ENCODE measurements at regions of chr14 and their contacts with region 1.

Region 1: DNA sequence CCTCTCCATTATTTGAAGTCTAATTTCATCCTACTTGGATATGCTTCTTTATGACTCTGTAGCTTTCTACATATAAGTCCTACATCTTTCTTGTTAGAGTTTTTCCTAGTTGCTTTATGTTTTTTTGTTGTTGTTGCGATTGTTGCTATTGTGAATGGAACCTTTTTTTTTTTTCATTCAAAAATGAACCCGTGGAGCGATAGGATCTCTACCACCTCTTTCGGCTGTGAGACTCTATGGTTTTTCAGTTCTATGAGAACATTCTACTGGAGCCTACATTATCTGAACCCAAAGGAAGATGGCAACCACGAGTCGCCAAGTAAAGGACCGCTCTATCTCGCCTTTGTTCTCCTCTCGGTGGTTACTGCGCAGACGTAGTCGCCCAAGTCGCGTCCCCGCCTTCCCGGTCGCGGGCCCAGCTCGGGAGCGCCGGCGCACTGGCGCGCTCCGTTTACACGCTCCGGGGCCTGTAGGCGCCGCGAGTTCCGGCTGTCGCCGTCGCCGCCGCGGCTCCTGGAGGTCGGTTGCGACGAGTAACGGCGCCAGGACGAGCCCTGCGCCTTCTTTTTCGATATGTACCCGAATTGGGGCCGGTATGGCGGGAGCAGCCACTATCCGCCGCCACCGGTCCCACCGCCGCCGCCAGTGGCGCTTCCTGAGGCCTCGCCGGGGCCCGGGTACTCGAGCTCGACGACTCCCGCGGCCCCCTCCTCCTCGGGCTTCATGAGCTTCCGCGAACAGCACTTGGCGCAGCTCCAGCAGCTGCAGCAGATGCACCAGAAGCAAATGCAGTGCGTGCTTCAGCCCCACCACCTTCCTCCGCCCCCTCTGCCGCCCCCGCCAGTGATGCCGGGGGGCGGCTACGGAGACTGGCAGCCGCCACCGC is at the start of gene YLPM1:
- DNase-seq: peak; percentile 83 to 97 (median 94)
- ATAC-seq: peak; percentile 86 to 89
- H3K4me3 Mint-ChIP-seq: peak within 1 kb of the TSS; percentile 83 to 98 (median 90)
- H3K27ac Mint-ChIP-seq: peak within 1 kb of the TSS; percentile 89 to 98 (median 96)
- H3K4me1 Mint-ChIP-seq: peaks cover 25 to 52% (median 49%) of the 10 kb centered on the region in 4 donors
- H3K27me3 Mint-ChIP-seq: no peaks in the 10 kb centered on the region
- polyA plus RNA-seq, gene YLPM1: 6.5 to 23.0 (median 14.0) TPM

Region 2: GRCh38 chr14:73771848-73772638 is 991.1 kb before region 1 on chr14:
- POLR2A ChIA-PET with region 1: no interaction called
- DNase-seq: peak in 9 of 10 donors; percentile 44 to 84 (median 65)
- ATAC-seq: peak; percentile 89
- H3K4me3 Mint-ChIP-seq: peak overlapping the region; percentile 43 to 75 (median 70)
- H3K27ac Mint-ChIP-seq: peak overlapping the region; percentile 70 to 97 (median 92)
- H3K4me1 Mint-ChIP-seq: peaks cover 33 to 83% (median 74%) of the 10 kb centered on the region in 4 donors
- H3K27me3 Mint-ChIP-seq: no peaks in the 10 kb centered on the region

Region 3: DNA sequence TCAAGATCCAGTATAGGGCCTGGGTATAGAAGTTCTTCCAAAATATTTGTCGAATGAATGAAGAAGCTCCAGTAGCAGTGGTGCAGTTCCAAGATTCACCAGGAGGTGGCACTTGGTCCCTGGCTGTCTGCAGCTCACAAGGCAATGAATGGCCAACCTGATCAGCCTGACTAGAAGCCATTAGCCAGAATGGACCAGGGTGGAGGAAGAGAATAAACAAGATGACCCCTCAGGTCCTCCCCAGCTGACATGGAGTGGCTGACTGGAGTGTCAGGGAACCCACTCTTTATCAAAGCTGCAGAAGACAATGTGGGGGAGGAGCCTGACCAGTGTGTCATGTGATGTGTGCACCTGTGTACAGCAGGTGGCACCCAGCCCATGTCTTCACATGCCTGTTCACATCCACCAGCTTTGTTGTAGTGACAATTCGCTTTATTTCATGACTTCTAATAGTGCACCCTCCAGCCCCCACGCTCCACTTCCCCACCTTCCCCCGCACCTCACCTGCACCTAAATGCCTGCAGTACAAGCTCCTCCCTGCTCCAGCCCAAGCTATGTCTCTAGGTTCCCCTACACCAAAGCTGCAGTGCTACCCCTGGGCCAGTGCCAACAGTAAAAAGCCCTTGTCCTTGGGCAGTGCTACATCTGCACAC is 154.1 kb before region 1 on chr14:
- POLR2A ChIA-PET with region 1: interaction called, 16 read pairs
- DNase-seq: peak; percentile 64 to 93 (median 84)
- ATAC-seq: peak; percentile 51 to 67
- H3K4me3 Mint-ChIP-seq: peak overlapping the region in 6 of 10 donors; percentile 3 to 79 (median 26)
- H3K27ac Mint-ChIP-seq: peak overlapping the region in 7 of 10 donors; percentile 2 to 81 (median 40)
- H3K4me1 Mint-ChIP-seq: peaks cover 15 to 30% (median 21%) of the 10 kb centered on the region in 4 donors
- H3K27me3 Mint-ChIP-seq: peaks cover 0 to 4% (median 0%) of the 10 kb centered on the region in 5 donors

Region 4: DNA sequence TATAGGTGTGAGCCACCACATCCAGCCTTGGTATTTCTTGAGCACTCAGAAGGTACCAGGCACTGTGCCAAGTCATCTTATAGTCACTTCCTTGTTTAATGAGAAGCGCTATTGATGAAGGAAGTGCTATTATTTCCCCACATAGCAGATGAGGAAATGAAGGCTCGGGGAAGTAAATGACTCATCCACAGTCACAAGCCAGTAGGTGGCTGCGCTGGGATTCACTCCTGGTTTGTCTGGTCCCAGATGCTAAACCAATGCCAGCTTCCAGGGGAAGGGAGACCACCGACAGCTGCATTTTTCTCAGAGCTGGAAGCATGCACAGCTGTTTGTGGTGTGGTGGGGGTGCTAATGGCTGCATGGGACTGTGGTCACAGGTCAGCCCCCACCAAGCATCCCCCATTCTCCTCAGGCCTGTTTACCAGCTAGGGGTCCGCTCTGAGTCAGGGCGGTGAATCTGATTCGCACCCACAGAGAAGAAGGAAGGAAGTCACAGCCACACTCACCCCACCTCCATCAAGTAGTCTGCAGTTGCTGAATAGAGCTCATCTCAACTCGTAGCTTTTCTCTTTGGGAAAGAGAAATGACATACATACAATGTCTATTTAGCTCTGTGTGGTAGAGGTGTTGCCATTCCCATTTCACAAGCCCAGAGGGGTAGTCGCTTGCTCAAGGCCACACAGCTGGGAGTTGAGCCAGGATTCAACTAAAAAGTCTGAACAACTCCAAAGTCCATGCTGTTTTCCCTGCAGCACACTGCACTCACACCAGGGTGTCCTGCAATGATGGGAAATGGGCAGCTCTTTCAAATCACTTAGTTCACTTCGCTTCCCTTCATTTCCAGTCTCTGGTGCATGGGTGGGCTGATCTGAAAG is 144.8 kb before region 1 on chr14:
- POLR2A ChIA-PET with region 1: interaction called, 10 read pairs
- DNase-seq: peak in 9 of 10 donors; percentile 26 to 80 (median 64)
- ATAC-seq: peak; percentile 89 to 92
- H3K4me3 Mint-ChIP-seq: peak overlapping the region; percentile 68 to 87 (median 80)
- H3K27ac Mint-ChIP-seq: peak overlapping the region; percentile 74 to 98 (median 94)
- H3K4me1 Mint-ChIP-seq: peaks cover 37 to 76% (median 64%) of the 10 kb centered on the region in 4 donors
- H3K27me3 Mint-ChIP-seq: peaks cover 0 to 5% (median 0%) of the 10 kb centered on the region in 5 donors

Region 5: GRCh38 chr14:74784634-74785033 is 21.5 kb after region 1 on chr14:
- POLR2A ChIA-PET with region 1: interaction called, 16 read pairs
- DNase-seq: peak in 4 of 10 donors; percentile 9 to 63 (median 46)
- ATAC-seq: peak; percentile 97 to 99
- H3K4me3 Mint-ChIP-seq: peak overlapping the region in 7 of 10 donors; percentile 0 to 59 (median 14)
- H3K27ac Mint-ChIP-seq: peak overlapping the region in 9 of 10 donors; percentile 38 to 92 (median 72)
- H3K4me1 Mint-ChIP-seq: peaks cover 20 to 46% (median 39%) of the 10 kb centered on the region in 4 donors
- H3K27me3 Mint-ChIP-seq: no peaks in the 10 kb centered on the region

Region 6: DNA sequence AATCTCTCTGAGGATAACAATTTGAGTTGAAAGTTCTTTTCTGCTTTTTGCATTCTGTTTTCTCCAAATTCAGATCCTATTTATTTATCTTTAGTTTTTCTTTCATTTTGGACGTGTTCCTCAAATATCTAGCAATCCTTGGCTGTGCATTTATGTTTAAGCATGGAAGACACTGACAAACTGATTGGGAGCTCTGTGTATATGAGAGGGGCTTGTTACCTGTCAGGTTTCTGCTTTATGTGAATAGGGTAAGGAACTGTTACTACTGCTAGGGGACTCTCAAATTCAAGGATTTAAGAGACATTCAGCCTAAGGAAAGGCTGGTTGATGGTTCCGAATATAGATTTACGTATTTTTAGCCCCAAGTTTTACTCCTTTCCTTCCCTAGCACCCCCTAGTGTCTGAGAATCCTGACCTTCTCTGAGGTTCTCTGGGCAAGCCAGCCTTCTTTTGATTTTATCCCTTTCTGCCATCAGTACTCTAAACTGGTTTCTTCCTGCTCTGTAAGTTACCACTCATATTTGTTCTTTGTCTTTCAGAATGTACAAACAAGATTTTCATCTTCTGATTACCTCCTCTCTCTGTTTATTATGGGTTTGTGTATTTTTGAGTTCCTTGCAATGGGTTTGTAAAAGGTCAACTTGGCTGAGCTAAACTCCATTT is 30.5 kb after region 1 on chr14:
- POLR2A ChIA-PET with region 1: interaction called, 15 read pairs
- DNase-seq: peak in 5 of 10 donors; percentile 20 to 57 (median 39)
- ATAC-seq: peak; percentile 64 to 74
- H3K4me3 Mint-ChIP-seq: peak overlapping the region; percentile 68 to 88 (median 80)
- H3K27ac Mint-ChIP-seq: peak overlapping the region; percentile 67 to 96 (median 92)
- H3K4me1 Mint-ChIP-seq: peaks cover 28 to 68% (median 56%) of the 10 kb centered on the region in 4 donors
- H3K27me3 Mint-ChIP-seq: no peaks in the 10 kb centered on the region